ENCODE measurements at regions of chr18 and their contacts with region 1.

Region 1: DNA sequence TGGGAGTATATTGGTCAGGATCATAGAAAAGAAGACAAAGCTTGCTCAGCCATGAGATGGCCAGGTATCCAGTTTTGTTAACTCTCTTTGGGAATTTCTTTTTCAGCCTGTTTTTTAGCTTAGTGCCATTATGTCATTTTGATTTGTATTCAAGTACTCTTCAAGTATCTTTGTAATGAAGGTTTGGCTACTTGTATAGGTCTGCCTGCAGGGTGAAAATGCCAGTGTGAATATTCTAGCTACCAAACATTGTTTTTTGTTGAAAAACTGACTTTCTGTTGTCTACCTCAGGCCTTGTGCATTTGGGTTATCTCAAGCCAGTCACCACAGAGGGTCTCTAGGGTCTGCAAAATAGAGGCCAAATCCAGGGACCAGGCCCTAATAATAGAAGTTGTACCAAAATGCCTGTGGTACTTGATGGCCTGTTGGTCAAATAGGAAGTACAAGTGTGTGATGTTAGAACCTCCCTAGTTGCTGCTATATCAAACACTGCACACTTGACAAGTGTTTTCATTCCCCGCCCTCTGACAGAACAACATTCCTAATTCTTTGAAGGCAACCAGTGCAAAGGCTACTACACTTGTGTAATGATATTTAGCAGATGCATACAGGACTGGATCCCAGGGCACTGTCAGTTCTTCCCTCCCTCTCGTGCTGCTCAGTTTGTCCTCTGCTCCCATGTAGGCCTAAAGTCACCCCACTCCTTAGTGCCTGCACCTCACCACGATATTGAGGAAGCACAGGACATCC is 36.4 kb downstream of the RNMT start:
- DNase-seq: no peak
- ATAC-seq: peak; percentile 89

Region 2: GRCh38 chr18:13703899-13704298 is 59.0 kb before region 1 on chr18:
- intact Hi-C with region 1: loop called (anchors 10 kb)
- DNase-seq: no peak
- ATAC-seq: no peak

Measured in left ventricle myocardium superior (tissue), 1 donor.